ENCODE measurements at regions of chr11 and their contacts with region 1.

Region 1: GRCh38 chr11:122655527-122656072 is at the start of gene UBASH3B:
- DNase-seq: peak; percentile 51 to 72
- ATAC-seq: peak; percentile 74 to 81 (median 77)
- H3K4me3 ChIP-seq: peak within 1 kb of the TSS; percentile 72
- H3K4me3 Mint-ChIP-seq: peak within 1 kb of the TSS; percentile 96
- H3K27ac ChIP-seq: peak within 1 kb of the TSS; percentile 61
- H3K27ac Mint-ChIP-seq: peak within 1 kb of the TSS; percentile 79 to 88
- H3K4me1 ChIP-seq: peaks cover 39% of the 10 kb centered on the region
- H3K4me1 Mint-ChIP-seq: peaks cover 40 to 46% of the 10 kb centered on the region in 2 donors
- H3K27me3 ChIP-seq: no peaks in the 10 kb centered on the region
- H3K27me3 Mint-ChIP-seq: peaks cover 0 to 13% of the 10 kb centered on the region in 2 donors
- CTCF ChIP-seq: no peak
- total RNA-seq, gene UBASH3B: 28.7 to 33.9 (median 33.5) TPM

Region 2: GRCh38 chr11:122697636-122698167 is 42.1 kb after region 1 on chr11:
- intact Hi-C with region 1: loop called (anchors 5 kb)
- DNase-seq: peak in 1 of 2 donors; percentile 71
- ATAC-seq: peak; percentile 57 to 77 (median 67)
- H3K4me3 ChIP-seq: no peak overlapping the region
- H3K4me3 Mint-ChIP-seq: peak overlapping the region; percentile 73
- H3K27ac ChIP-seq: peak overlapping the region; percentile 76
- H3K27ac Mint-ChIP-seq: peak overlapping the region; percentile 65 to 85
- H3K4me1 ChIP-seq: peaks cover 43% of the 10 kb centered on the region
- H3K4me1 Mint-ChIP-seq: peaks cover 35 to 46% of the 10 kb centered on the region in 2 donors
- H3K27me3 ChIP-seq: no peaks in the 10 kb centered on the region
- H3K27me3 Mint-ChIP-seq: no peaks in the 10 kb centered on the region
- CTCF ChIP-seq: no peak

Region 3: DNA sequence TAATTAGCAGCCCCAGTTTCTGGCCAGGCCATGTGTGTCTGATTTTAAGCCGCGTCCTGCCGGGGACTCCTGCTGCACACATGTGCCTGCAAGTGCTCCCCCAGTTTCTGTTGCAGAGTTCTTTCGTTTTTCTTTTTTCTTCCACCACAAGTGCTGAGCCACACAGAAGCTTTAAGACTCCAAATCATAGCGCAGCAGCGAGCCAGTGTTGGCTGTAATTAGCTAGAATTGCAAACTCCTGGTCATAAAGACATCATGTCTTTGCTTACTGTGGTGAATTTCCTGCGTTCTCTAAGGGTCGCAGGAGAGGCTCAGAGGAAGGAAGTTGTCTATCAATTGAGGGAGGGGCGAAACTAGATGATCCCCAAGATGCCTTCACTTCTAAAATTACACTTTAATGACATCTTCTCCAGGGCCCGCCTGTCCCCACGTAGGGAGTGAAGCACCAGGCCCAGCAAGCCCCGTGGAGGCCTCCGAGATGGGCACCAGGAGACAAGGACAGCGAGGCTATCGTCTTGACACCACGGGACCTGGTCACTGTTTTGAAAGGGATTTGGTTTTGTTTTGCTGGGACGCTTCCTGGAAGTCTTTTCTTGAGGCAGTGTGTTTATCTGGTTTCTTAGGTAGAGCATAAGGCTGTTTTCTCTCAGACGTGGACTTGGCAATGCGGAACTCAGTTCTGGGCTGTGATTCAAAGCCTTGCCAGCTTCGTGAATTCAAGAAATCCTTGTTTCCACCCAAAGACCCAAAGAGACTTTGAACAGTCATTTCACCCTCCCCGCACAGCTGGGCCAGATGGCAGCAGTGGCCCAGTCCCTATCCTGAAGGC is 71.7 kb after region 1 on chr11:
- intact Hi-C with region 1: no loop called
- DNase-seq: peak in 1 of 2 donors; percentile 65
- ATAC-seq: peak; percentile 61 to 77 (median 66)
- H3K4me3 ChIP-seq: no peak overlapping the region
- H3K4me3 Mint-ChIP-seq: peak overlapping the region; percentile 93
- H3K27ac ChIP-seq: peak overlapping the region; percentile 30
- H3K27ac Mint-ChIP-seq: peak overlapping the region; percentile 67 to 70
- H3K4me1 ChIP-seq: peaks cover 64% of the 10 kb centered on the region
- H3K4me1 Mint-ChIP-seq: peaks cover 64 to 70% of the 10 kb centered on the region in 2 donors
- H3K27me3 ChIP-seq: no peaks in the 10 kb centered on the region
- H3K27me3 Mint-ChIP-seq: peaks cover 0 to 8% of the 10 kb centered on the region in 2 donors
- CTCF ChIP-seq: no peak

Region 4: DNA sequence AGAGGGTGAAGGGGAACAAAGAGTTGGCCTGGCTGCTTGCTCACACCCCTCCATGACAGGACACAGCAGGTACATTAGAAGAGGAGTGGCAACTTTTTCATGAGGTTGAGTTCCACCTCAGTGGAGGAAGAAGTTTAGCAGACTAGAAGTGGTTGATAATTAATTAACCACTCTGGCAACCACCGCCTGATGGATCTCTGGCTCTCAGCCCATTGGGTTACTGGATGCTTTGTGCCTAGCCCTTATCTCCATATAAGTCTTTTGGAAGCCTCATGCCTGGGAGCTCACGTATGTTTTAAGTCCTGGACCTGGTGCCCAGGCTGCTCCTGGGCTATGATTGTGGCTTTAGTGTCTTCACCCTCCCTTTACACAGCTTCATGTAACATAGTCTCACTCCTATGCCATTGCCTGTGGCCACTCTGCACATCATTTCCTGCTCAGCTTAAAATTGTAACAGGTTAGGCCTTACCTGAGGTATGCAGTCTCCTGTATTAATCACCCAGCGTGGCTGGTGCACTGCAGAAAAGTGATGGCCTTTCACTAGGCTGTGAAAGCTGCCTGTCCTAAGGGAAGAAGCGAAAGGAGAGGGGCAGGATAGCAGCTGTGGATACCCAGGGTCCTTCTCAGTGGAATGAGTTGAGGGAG is 110.0 kb after region 1 on chr11:
- intact Hi-C with region 1: no loop called
- DNase-seq: no peak
- ATAC-seq: no peak
- H3K4me3 ChIP-seq: no peak overlapping the region
- H3K4me3 Mint-ChIP-seq: no peak overlapping the region
- H3K27ac ChIP-seq: no peak overlapping the region
- H3K27ac Mint-ChIP-seq: no peak overlapping the region
- H3K4me1 ChIP-seq: no peaks in the 10 kb centered on the region
- H3K4me1 Mint-ChIP-seq: peaks cover 15 to 27% of the 10 kb centered on the region in 2 donors
- H3K27me3 ChIP-seq: no peaks in the 10 kb centered on the region
- H3K27me3 Mint-ChIP-seq: no peaks in the 10 kb centered on the region
- CTCF ChIP-seq: no peak